ENCODE measurements at regions of chr20 and their contacts with region 1.

Region 1: DNA sequence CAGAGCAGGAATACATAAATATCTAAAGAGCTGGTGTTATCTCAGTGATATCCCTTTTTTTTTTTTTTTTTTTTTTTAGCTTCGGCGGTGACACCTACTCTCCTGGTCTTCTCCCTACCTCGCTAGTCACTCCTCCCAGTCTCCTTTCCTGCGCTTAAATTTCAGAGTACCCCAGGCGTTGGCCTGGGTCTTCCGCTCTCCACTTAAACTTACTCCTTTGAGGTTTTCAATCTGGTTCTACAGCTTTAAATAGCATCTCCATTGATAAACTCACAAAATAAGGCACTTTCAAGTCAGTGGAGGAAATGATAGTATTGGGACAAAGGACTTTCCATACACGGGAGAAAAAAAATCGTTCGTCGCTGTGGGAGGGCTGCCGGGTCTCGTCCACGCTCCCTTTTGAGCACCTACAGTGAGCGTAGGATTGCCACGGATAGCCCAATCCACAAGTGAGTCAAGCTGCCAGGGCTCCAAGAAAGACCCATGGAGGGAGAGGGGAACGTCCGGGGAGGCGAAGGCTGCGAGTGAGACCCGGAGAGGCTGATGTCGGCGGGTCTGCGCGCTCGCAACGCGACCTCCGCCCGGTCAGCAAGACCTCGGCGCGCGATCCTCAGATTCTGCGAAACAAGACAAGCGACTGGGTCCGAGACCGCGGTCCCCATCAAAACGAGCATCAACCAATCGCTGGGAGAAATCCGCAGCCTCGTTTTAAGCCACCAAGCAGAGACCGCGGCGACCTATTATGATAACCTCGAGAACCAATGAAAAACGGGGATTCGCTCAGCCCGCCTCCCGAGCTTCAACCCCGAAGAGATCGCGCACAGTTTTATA is 672 bp upstream of the SRSF6 start:
- DNase-seq: peak in 7 of 9 donors; percentile 73 to 92 (median 91)
- ATAC-seq: peak; percentile 82
- H3K4me3 ChIP-seq: peak overlapping the region; percentile 86
- H3K4me3 Mint-ChIP-seq: peak overlapping the region; percentile 79 to 100 (median 94)
- H3K27ac ChIP-seq: peak overlapping the region; percentile 100
- H3K27ac Mint-ChIP-seq: peak overlapping the region; percentile 96 to 100 (median 99)
- H3K4me1 ChIP-seq: peaks cover 10 to 29% of the 10 kb centered on the region in 2 donors
- H3K4me1 Mint-ChIP-seq: peaks cover 24 to 42% (median 35%) of the 10 kb centered on the region in 7 donors
- H3K27me3 ChIP-seq: no peaks in the 10 kb centered on the region
- H3K27me3 Mint-ChIP-seq: peaks cover 0 to 14% (median 4%) of the 10 kb centered on the region in 5 donors

Region 2: GRCh38 chr20:43514062-43514999 is 57.3 kb after region 1 on chr20:
- CTCF ChIA-PET with region 1: no interaction called
- POLR2A ChIA-PET with region 1: interaction called, 18 read pairs
- intact Hi-C with region 1: loop called (anchors 1 kb)
- DNase-seq: peak; percentile 74 to 94 (median 90)
- ATAC-seq: peak; percentile 96
- H3K4me3 ChIP-seq: peak overlapping the region; percentile 70
- H3K4me3 Mint-ChIP-seq: peak overlapping the region; percentile 89 to 100 (median 94)
- H3K27ac ChIP-seq: peak overlapping the region; percentile 58
- H3K27ac Mint-ChIP-seq: peak overlapping the region; percentile 86 to 94 (median 90)
- H3K4me1 ChIP-seq: peaks cover 7 to 21% of the 10 kb centered on the region in 2 donors
- H3K4me1 Mint-ChIP-seq: peaks cover 3 to 28% (median 21%) of the 10 kb centered on the region in 7 donors
- H3K27me3 ChIP-seq: no peaks in the 10 kb centered on the region
- H3K27me3 Mint-ChIP-seq: peaks cover 2 to 10% (median 3%) of the 10 kb centered on the region in 5 donors

Region 3: DNA sequence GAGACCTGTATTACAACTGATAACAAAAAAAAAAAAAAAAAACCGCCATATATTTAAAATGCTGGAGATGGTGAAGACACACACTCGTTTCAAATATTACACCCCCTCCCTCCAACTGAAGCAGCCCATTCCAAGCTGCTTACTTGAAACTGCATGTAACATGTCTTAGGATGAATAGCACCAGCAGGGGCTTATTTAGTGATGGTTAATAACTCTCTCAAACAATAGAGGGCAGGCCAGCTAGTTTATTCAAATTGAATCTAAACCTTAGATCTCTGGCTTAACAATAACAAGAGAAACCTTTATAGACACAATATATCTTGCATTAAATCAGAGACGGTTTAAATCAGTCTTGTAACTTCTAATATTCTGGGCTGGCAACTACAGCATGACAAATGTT is 739.2 kb after region 1 on chr20:
- CTCF ChIA-PET with region 1: no interaction called
- POLR2A ChIA-PET with region 1: no interaction called
- intact Hi-C with region 1: loop called in 1 of 2 experiments (anchors 5 kb)
- DNase-seq: peak in 1 of 9 donors; percentile 14
- ATAC-seq: peak; percentile 50
- H3K4me3 ChIP-seq: no peak overlapping the region
- H3K4me3 Mint-ChIP-seq: no peak overlapping the region
- H3K27ac ChIP-seq: no peak overlapping the region
- H3K27ac Mint-ChIP-seq: peak overlapping the region in 2 of 9 donors; percentile 22 to 30
- H3K4me1 ChIP-seq: no peaks in the 10 kb centered on the region
- H3K4me1 Mint-ChIP-seq: peaks cover 16 to 29% (median 20%) of the 10 kb centered on the region in 7 donors
- H3K27me3 ChIP-seq: no peaks in the 10 kb centered on the region
- H3K27me3 Mint-ChIP-seq: peaks cover 0 to 6% (median 0%) of the 10 kb centered on the region in 5 donors

Measured in naive thymus-derived CD4-positive, alpha-beta T cell (primary cell).